ENCODE measurements at regions of chr2 and their contacts with region 1.

Region 1: GRCh38 chr2:11941201-11942177 is 195.1 kb downstream of the LPIN1 start:
- DNase-seq: peak; percentile 85 to 95 (median 91)
- ATAC-seq: peak; percentile 95
- H3K4me3 ChIP-seq: no peak overlapping the region
- H3K27ac ChIP-seq: peak overlapping the region; percentile 74
- H3K4me1 ChIP-seq: peaks cover 9 to 44% of the 10 kb centered on the region in 2 experiments
- H3K27me3 ChIP-seq: no peaks in the 10 kb centered on the region
- CTCF ChIP-seq: no peak
- EP300 ChIP-seq: peak; percentile 99
- POLR2A ChIP-seq: no peak
- RAD21 ChIP-seq: peak; percentile 31 to 32; a peak in 3 of 4 replicates

Region 2: DNA sequence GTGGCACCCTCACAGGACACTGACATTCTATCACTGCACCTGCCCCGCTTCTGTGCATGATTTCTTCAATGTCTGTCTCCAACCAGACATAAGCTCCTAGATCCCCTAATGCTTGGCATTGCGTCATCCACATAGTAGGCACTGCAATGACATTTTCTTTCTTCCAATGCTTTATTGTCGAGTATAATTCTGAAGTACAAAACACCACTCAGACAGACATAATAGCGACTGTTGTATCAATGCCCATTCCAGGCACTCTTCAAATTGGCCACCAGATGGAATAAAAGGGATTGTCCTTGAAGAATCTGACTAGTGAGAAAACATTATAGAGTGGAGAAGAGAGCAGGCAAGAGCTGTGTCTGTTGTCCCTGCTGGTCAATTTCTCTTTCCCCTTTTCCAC is 106.1 kb before region 1 on chr2:
- CTCF ChIA-PET with region 1: no interaction called
- POLR2A ChIA-PET with region 1: no interaction called
- in situ Hi-C with region 1: no loop called
- intact Hi-C with region 1: no loop called
- DNase-seq: peak in 1 of 4 experiments; percentile 23
- ATAC-seq: peak; percentile 52
- H3K4me3 ChIP-seq: no peak overlapping the region
- H3K27ac ChIP-seq: no peak overlapping the region
- H3K4me1 ChIP-seq: peaks cover 7 to 12% of the 10 kb centered on the region in 2 experiments; a peak in 4 of 5 replicates
- H3K27me3 ChIP-seq: peaks cover 0 to 11% of the 10 kb centered on the region in 2 experiments; a peak in 1 of 5 replicates
- CTCF ChIP-seq: peak in 1 of 3 experiments; percentile 8; a peak in 1 of 6 replicates
- EP300 ChIP-seq: no peak
- POLR2A ChIP-seq: no peak
- RAD21 ChIP-seq: peak in 1 of 2 experiments; percentile 55; a peak in 2 of 4 replicates

Region 3: DNA sequence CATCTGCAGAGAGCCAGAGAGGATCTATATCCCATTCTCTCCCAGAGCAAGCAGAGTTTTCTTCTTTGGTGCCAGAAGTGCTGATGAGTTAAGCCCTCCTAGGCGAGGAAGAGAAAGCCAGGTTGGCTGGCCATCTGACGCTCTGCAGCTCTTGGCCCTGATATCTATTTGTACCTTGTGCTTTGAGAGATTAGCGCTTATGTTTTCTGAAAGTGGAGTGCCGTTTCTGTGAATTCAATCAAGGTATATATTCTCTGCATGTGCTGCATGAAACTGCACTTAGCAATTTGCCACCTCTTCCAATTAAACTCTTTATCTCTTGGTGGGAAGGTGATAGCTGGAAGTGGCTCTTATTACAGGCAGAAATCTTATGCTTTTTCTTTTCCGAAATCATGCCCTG is 17.6 kb before region 1 on chr2:
- CTCF ChIA-PET with region 1: no interaction called
- POLR2A ChIA-PET with region 1: interaction called, 12 read pairs
- in situ Hi-C with region 1: no loop called
- intact Hi-C with region 1: no loop called
- DNase-seq: peak in 2 of 4 experiments; percentile 39 to 55
- ATAC-seq: peak; percentile 66
- H3K4me3 ChIP-seq: no peak overlapping the region
- H3K27ac ChIP-seq: no peak overlapping the region
- H3K4me1 ChIP-seq: peaks cover 3 to 24% of the 10 kb centered on the region in 2 experiments
- H3K27me3 ChIP-seq: 0 out of 5 replicates have a peak, but pooled peaks cover 0 to 3% of the 10 kb centered on the region in 2 experiments
- CTCF ChIP-seq: no peak
- EP300 ChIP-seq: no peak
- POLR2A ChIP-seq: no peak
- RAD21 ChIP-seq: no peak

Region 4: GRCh38 chr2:11930211-11930761 is 11.2 kb before region 1 on chr2:
- CTCF ChIA-PET with region 1: no interaction called
- POLR2A ChIA-PET with region 1: interaction called, 12 read pairs
- in situ Hi-C with region 1: no loop called
- intact Hi-C with region 1: no loop called
- DNase-seq: peak in 1 of 4 experiments; percentile 26
- ATAC-seq: peak; percentile 15; the same call in 1 of the 3 replicates
- H3K4me3 ChIP-seq: no peak overlapping the region
- H3K27ac ChIP-seq: no peak overlapping the region
- H3K4me1 ChIP-seq: peaks cover 8 to 25% of the 10 kb centered on the region in 2 experiments; a peak in 4 of 5 replicates
- H3K27me3 ChIP-seq: no peaks in the 10 kb centered on the region
- CTCF ChIP-seq: no peak
- EP300 ChIP-seq: no peak
- POLR2A ChIP-seq: no peak
- RAD21 ChIP-seq: no peak

Region 5: DNA sequence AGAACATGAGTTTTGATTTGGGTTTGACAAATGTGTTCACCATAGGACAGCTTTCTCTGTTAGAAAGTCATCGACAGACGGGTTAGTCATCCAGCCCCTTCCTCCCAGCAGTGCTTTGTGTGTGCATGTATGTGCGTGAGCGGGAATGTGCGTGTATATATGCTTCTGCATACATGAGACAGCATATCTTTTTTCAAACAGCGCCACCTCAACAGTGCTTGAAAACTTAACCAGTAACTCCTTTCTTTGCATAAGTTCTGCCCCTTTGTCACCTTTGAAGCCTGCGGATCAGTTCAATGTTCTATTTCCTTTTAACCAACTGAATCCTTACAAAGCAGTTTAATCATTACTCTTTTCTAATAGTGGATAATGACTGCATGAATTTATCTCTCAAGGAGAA is 156.4 kb after region 1 on chr2:
- CTCF ChIA-PET with region 1: no interaction called
- POLR2A ChIA-PET with region 1: no interaction called
- in situ Hi-C with region 1: no loop called
- intact Hi-C with region 1: no loop called
- DNase-seq: peak in 3 of 4 experiments; percentile 16 to 62 (median 26)
- ATAC-seq: peak; percentile 81
- H3K4me3 ChIP-seq: no peak overlapping the region
- H3K27ac ChIP-seq: no peak overlapping the region
- H3K4me1 ChIP-seq: peaks cover 0 to 7% of the 10 kb centered on the region in 2 experiments; a peak in 3 of 5 replicates
- H3K27me3 ChIP-seq: no peaks in the 10 kb centered on the region
- CTCF ChIP-seq: peak; percentile 3 to 41 (median 37); a peak in 2 of 6 replicates
- EP300 ChIP-seq: no peak
- POLR2A ChIP-seq: no peak
- RAD21 ChIP-seq: peak in 1 of 2 experiments; percentile 30; a peak in 2 of 4 replicates